ENCODE measurements at regions of chr6 and their contacts with region 1.

Region 1: GRCh38 chr6:106608062-106608668 is 21.1 kb downstream of the RTN4IP1 start:
- DNase-seq: peak; percentile 78
- H3K4me3 Mint-ChIP-seq: no peak overlapping the region
- H3K27ac Mint-ChIP-seq: no peak overlapping the region
- H3K4me1 Mint-ChIP-seq: peaks cover 11% of the 10 kb centered on the region
- H3K27me3 Mint-ChIP-seq: no peaks in the 10 kb centered on the region

Region 2: DNA sequence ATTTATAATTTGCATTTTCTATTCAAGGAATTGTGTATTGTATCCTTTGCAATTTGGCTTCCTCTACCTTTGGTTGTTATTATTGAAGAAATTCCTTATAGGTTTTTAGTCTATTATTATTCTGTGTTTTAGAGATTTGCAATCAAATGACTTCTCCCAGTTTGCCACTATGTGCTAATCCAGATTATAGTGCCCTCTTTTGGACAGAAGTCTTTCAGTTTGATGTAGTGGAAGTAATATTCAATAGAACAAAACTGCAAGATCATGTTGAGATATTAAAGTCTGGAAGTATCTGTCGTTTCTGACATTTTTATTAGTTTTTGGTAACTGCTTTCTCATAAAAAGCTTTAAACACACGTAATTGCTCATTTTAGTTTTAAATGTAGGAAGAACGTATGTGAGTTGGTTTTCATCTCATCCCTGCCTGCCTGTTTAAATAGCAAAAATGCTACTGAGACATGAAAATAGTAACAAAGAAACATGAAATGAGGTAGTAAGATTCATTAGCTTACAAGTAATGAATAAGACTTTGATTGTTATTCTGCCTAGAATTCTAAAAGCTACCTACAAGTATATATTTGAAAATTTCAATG is 51.7 kb before region 1 on chr6:
- intact Hi-C with region 1: no loop called
- DNase-seq: no peak
- H3K4me3 Mint-ChIP-seq: no peak overlapping the region
- H3K27ac Mint-ChIP-seq: no peak overlapping the region
- H3K4me1 Mint-ChIP-seq: peaks cover 24% of the 10 kb centered on the region
- H3K27me3 Mint-ChIP-seq: no peaks in the 10 kb centered on the region

Region 3: GRCh38 chr6:106591111-106591825 is 16.9 kb before region 1 on chr6:
- intact Hi-C with region 1: no loop called
- DNase-seq: no peak
- H3K4me3 Mint-ChIP-seq: no peak overlapping the region
- H3K27ac Mint-ChIP-seq: no peak overlapping the region
- H3K4me1 Mint-ChIP-seq: no peaks in the 10 kb centered on the region
- H3K27me3 Mint-ChIP-seq: no peaks in the 10 kb centered on the region

Region 4: DNA sequence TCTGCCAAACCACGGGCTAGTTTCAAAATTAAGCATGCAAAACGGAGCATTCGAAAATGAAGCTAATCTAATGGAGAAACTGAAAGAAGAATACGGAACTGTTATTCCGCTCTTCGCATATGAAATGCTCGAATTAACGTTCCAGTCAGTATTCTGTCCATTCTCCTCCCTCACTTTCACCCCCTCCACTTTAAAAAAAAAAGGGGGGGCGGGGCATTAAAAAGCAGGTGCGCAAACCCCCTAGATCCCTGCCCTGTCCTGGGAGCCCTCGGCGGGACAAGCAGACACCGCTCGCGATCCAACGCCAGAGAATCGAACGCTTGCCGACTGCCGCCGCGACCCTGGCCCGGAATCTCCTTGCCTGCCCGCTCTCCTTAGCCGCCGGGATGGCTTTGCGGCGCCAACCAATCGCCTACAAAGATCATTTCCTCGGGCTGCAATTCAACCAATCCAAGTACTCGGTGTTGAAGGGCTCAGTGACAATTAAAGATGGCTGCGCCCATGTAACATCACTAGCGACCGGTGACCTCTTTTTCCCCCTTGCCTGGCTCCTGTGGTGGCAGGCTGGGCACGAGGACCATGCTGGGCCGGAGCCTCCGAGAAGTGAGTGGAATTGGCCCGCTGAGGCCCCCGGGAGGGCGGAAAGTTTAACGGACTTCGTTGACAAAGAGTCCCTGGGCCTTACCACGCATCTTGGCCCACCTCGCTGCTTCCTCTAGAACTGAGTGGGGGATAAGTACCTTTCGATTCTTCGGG is 21.1 kb after region 1 on chr6 and contains the starts of genes QRSL1 and RTN4IP1:
- intact Hi-C with region 1: loop called (anchors 2 kb)
- DNase-seq: peak; percentile 95
- H3K4me3 Mint-ChIP-seq: peak within 1 kb of the TSS; percentile 92
- H3K27ac Mint-ChIP-seq: peak within 1 kb of the TSS; percentile 97
- H3K4me1 Mint-ChIP-seq: peaks cover 18% of the 10 kb centered on the region
- H3K27me3 Mint-ChIP-seq: no peaks in the 10 kb centered on the region
- total RNA-seq, gene QRSL1: 22.4 and 24.2 TPM in 2 replicates
- total RNA-seq, gene RTN4IP1: 7.2 and 8.0 TPM in 2 replicates

Region 5: GRCh38 chr6:106648651-106649308 is 40.6 kb after region 1 on chr6:
- intact Hi-C with region 1: loop called (anchors 5 kb)
- DNase-seq: no peak
- H3K4me3 Mint-ChIP-seq: no peak overlapping the region
- H3K27ac Mint-ChIP-seq: no peak overlapping the region
- H3K4me1 Mint-ChIP-seq: no peaks in the 10 kb centered on the region
- H3K27me3 Mint-ChIP-seq: no peaks in the 10 kb centered on the region